ENCODE measurements at regions of chr6 and their contacts with region 1.

Region 1: GRCh38 chr6:43454696-43455530 is 435 bp downstream of the DLK2 start:
- DNase-seq: peak in 8 of 10 donors; percentile 83 to 98 (median 87)

Region 2: DNA sequence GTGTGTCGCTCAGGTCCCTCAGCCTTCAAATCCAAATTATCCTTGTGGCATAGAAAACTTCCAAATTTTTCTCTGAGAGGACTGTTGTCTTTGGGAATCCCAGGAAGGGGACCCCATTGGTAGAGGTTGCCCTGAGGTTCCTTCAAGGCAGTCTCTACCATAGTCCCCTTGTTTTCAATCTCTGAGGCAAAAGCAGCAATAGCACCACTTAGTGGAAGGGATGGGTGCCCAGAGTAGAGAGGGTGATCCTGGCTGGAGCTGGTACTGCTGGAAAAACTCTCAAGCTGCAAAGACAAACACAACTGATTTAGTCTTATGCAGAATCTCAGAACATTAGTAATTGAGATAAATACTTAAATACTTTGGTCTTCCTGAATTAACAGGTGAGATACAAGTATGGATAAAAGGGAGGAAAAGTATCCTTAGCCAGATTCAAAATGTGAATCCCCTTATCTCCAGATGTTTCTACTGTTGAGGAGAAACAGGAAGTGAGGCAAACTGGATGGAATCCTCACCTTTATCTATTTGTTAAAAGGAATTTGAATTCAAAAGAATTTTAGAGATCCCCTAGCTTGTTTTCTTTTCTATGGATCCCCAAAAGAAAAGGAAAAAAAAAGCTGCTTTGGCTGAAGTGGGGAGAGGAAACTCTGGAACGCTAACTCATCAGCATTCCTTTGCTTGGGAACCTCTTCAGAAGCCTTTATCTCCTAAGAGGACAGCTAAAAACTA is 98.9 kb before region 1 on chr6:
- intact Hi-C with region 1: no loop called
- DNase-seq: no peak

Region 3: DNA sequence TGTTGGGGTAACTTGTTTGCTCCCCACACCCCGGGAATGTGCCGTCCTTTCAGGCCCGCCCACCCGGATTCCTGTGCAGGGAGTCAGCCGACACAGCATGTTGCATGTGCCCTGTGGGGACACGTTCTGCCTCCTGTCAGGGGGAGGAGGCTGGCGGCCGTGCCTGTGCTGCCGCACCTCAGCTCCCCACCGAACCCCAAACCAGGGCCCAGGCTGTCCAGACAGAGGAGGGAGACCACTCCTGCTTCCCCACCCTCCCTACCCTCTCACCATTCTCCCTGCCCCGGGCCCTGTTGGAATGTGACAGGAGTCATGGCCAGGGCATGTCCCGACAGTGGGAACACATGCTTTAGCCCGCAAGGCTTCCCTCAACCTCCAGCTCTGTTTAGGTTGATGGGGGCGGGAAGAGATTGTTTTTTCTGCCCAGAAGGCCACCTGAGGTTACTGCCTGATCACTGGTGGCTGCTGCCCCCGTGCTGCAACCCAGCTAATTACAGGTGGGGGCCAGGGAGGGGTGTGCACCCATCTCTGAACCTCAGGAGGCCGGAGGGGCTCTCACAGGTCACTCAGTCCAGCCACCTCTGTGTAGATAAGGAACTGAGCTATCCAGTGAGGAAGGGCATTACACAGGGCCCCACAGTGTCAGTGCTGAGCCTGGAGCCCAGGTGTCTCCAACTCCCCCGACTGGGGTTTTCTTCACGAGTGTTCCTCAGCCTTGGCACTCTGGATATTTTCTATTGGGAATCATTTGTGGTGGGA is 41.6 kb after region 1 on chr6:
- intact Hi-C with region 1: loop called (anchors 2 kb)
- DNase-seq: peak in 6 of 10 donors; percentile 50 to 92 (median 70)